Natural killer cell (primary cell): ENCODE measurements at regions of chr14 and their contacts with region 1.

Region 1: DNA sequence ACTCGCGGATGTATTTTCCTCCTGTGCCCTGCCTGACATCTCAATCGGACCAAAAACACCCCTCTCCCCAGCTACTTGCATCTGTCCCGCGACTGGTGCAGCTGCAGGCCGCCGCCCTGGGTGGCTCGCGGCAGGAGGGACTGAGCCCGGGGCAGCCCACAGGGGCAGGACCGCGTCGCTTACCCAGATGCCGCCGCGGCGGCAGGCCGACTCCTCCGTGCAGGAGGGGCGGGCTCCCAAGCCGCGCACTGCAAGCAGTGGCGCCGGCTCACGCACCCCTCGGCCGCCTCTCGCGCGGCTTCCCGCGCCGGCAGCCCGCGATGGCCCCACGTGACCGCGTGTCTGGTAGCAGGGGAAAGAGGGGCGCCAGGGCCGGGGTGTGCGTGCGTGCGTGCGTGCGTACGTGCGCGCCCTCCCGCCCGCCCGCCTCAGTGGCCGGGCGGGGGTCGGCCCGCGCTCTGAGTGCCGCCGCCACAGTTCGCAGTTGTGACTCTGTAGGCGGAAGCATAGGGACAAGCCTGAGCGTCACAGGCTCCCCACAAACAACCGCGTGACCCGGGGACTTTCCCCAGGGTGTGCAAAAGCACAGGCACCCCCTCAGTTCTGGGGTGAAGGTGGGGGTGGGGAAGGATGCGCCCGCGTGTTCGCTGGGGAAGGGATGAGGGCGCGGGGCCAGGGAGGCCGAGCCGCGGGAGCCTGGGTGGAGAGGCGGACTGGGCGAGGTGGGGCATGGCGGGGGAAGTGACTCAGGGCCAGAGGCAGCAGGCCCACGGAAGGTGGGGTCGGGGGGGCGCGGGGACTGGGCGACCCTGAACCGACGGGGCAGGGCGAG is at the start of gene ZBTB25:
- DNase-seq: peak; percentile 96 to 99
- ATAC-seq: peak; percentile 67 to 85 (median 70)
- H3K4me3 ChIP-seq: peak within 1 kb of the TSS; percentile 99
- H3K4me3 Mint-ChIP-seq: peak within 1 kb of the TSS; percentile 98
- H3K27ac ChIP-seq: peak within 1 kb of the TSS; percentile 100
- H3K27ac Mint-ChIP-seq: peak within 1 kb of the TSS; percentile 99
- H3K4me1 ChIP-seq: peaks cover 42% of the 10 kb centered on the region
- H3K4me1 Mint-ChIP-seq: peaks cover 66 to 73% of the 10 kb centered on the region in 2 donors
- H3K27me3 ChIP-seq: no peaks in the 10 kb centered on the region
- H3K27me3 Mint-ChIP-seq: no peaks in the 10 kb centered on the region
- CTCF ChIP-seq: no peak
- total RNA-seq, gene ZBTB25: 29.7 to 36.7 (median 31.1) TPM

Region 2: GRCh38 chr14:64387694-64388532 is 115.8 kb before region 1 on chr14 and contains the start of gene MTHFD1:
- intact Hi-C with region 1: loop called (anchors 5 kb)
- DNase-seq: peak; percentile 92 to 99
- ATAC-seq: peak; percentile 86 to 90 (median 88)
- H3K4me3 ChIP-seq: peak within 1 kb of the TSS; percentile 87
- H3K4me3 Mint-ChIP-seq: peak within 1 kb of the TSS; percentile 99
- H3K27ac ChIP-seq: peak within 1 kb of the TSS; percentile 63
- H3K27ac Mint-ChIP-seq: peak within 1 kb of the TSS; percentile 90 to 97
- H3K4me1 ChIP-seq: peaks cover 22% of the 10 kb centered on the region
- H3K4me1 Mint-ChIP-seq: peaks cover 20 to 28% of the 10 kb centered on the region in 2 donors
- H3K27me3 ChIP-seq: no peaks in the 10 kb centered on the region
- H3K27me3 Mint-ChIP-seq: no peaks in the 10 kb centered on the region
- CTCF ChIP-seq: no peak
- total RNA-seq, gene MTHFD1: 27.6 to 34.6 (median 28.0) TPM

Region 3: GRCh38 chr14:64444984-64445845 is 58.5 kb before region 1 on chr14:
- intact Hi-C with region 1: loop called (anchors 1 kb)
- DNase-seq: peak; percentile 55 to 76
- ATAC-seq: peak; percentile 90 to 96 (median 95)
- H3K4me3 ChIP-seq: no peak overlapping the region
- H3K4me3 Mint-ChIP-seq: peak overlapping the region; percentile 58
- H3K27ac ChIP-seq: peak overlapping the region; percentile 93
- H3K27ac Mint-ChIP-seq: peak overlapping the region; percentile 89 to 99
- H3K4me1 ChIP-seq: peaks cover 60% of the 10 kb centered on the region
- H3K4me1 Mint-ChIP-seq: peaks cover 53 to 54% of the 10 kb centered on the region in 2 donors
- H3K27me3 ChIP-seq: no peaks in the 10 kb centered on the region
- H3K27me3 Mint-ChIP-seq: no peaks in the 10 kb centered on the region
- CTCF ChIP-seq: no peak

Region 4: DNA sequence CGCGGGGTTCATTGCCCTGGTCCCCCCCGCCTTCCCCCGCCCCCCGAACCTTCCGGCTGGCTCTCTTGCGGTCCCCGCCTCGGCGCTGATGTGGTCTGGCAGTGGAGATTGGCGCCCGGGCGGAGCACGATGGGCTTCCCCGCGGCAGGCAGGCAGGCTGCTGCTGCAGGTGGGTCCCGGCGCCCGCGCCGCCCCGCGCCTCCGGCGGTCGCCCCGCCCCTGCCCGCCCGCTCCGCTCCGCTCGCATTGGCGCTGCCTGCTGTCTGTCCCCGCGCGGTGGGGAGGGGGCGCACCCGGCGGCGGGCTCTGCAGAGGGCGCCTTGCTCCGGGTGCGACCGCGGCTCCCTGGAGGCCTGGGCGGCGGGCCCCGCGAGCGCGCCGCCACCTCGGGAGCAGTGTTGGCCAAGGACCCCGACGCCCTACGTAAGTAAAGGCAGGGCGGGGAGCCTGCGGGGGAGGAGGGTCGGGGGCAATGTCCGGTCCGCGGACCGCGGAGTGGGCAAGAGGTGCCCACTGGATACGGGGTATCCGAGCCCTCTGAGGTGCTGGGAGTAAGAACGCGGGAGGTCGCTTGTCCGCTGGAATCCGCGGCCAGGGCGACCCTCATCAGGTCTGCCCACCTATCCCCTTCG is 38.4 kb before region 1 on chr14 and contains the start of gene AKAP5:
- intact Hi-C with region 1: loop called (anchors 5 kb)
- DNase-seq: peak; percentile 66 to 82
- ATAC-seq: peak; percentile 86 to 91 (median 88)
- H3K4me3 ChIP-seq: peak within 1 kb of the TSS; percentile 71
- H3K4me3 Mint-ChIP-seq: peak within 1 kb of the TSS; percentile 96
- H3K27ac ChIP-seq: peak within 1 kb of the TSS; percentile 62
- H3K27ac Mint-ChIP-seq: peak within 1 kb of the TSS; percentile 89 to 92
- H3K4me1 ChIP-seq: peaks cover 14% of the 10 kb centered on the region
- H3K4me1 Mint-ChIP-seq: peaks cover 41% of the 10 kb centered on the region in 2 donors
- H3K27me3 ChIP-seq: no peaks in the 10 kb centered on the region
- H3K27me3 Mint-ChIP-seq: no peaks in the 10 kb centered on the region
- CTCF ChIP-seq: no peak
- total RNA-seq, gene AKAP5: 11.1 to 16.3 (median 12.0) TPM

Region 5: DNA sequence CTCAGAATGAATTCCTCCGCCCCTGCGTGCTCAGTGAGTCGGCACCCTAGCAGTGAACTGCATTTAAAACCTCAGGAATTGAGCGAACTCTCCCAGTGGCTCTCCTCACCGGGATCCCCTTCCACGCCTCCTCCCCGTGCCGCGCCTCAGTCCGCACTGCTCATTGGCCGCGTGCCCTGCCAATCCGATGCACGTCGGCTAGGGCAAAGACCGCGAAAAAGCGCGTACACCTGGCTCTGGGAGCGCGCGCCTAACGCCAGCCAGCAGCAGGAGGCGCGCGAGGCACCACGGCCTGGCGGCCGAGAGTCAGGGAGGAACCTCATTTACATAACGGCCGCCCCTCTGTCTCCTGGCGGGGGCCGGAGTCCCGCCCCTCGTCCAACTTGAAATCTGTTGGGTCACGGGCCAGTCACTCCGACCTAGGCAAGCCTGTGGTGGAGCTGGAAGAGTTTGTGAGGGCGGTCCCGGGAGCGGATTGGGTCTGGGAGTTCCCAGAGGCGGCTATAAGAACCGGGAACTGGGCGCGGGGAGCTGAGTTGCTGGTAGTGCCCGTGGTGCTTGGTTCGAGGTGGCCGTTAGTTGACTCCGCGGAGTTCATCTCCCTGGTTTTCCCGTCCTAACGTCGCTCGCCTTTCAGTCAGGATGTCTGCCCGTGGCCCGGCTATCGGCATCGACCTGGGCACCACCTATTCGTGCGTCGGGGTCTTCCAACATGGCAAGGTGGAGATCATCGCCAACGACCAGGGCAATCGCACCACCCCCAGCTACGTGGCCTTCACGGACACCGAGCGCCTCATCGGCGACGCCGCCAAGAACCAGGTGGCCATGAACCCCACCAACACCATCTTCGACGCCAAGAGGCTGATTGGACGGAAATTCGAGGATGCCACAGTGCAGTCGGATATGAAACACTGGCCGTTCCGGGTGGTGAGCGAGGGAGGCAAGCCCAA is 36.8 kb after region 1 on chr14 and contains the start of gene HSPA2:
- intact Hi-C with region 1: loop called (anchors 1 kb)
- DNase-seq: peak; percentile 94 to 97
- ATAC-seq: peak; percentile 91 to 97 (median 91)
- H3K4me3 ChIP-seq: peak within 1 kb of the TSS; percentile 96
- H3K4me3 Mint-ChIP-seq: peak within 1 kb of the TSS; percentile 100
- H3K27ac ChIP-seq: peak within 1 kb of the TSS; percentile 61
- H3K27ac Mint-ChIP-seq: peak within 1 kb of the TSS; percentile 91 to 93
- H3K4me1 ChIP-seq: peaks cover 34% of the 10 kb centered on the region
- H3K4me1 Mint-ChIP-seq: peaks cover 34 to 44% of the 10 kb centered on the region in 2 donors
- H3K27me3 ChIP-seq: peaks cover 9% of the 10 kb centered on the region
- H3K27me3 Mint-ChIP-seq: peaks cover 13 to 25% of the 10 kb centered on the region in 2 donors
- CTCF ChIP-seq: peak; percentile 64
- total RNA-seq, gene HSPA2: 1.1 to 1.5 (median 1.1) TPM

Region 6: DNA sequence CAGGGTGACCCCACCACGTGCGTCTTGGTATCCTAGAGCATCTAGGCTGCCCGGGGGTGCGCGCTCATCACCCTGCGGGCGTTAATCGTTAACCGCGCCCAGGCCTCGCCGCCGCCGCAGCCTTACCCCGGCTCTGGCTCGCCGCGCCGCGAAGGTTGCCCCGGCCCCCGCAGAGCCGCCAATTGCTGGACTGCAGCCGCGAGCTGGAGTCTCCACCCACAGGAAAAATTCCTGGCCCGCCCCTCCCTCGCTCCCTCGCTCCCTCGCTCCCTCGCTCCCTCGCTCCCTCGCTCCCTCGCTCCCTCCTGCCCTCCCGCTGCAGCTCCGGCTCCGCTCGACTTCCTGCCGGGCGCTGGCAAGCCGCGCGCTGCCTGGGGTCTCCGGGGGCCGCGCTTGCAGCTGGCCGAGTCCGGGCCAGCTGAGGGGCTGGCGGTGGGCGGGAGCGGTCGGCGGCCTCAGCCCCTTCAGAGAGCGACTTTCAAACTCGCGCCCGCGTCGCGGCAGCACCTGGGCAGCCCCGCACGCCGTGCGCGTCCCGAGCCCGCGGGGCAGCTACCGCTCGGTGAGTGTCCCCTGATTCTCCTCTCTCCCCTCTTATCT is 200.5 kb after region 1 on chr14 and contains the start of gene PLEKHG3:
- intact Hi-C with region 1: loop called (anchors 10 kb)
- DNase-seq: peak; percentile 59 to 69
- ATAC-seq: peak; percentile 45 to 64 (median 63)
- H3K4me3 ChIP-seq: peak within 1 kb of the TSS; percentile 67
- H3K4me3 Mint-ChIP-seq: peak within 1 kb of the TSS; percentile 87
- H3K27ac ChIP-seq: peak within 1 kb of the TSS; percentile 77
- H3K27ac Mint-ChIP-seq: peak within 1 kb of the TSS; percentile 76 to 86
- H3K4me1 ChIP-seq: peaks cover 63% of the 10 kb centered on the region
- H3K4me1 Mint-ChIP-seq: peaks cover 53 to 54% of the 10 kb centered on the region in 2 donors
- H3K27me3 ChIP-seq: no peaks in the 10 kb centered on the region
- H3K27me3 Mint-ChIP-seq: no peaks in the 10 kb centered on the region
- CTCF ChIP-seq: no peak
- total RNA-seq, gene PLEKHG3: 184 to 285 (median 225) TPM